Activated CD4-positive, alpha-beta T cell treated with anti-CD3 and anti-CD28 coated beads, Interleukin-2, amount 10 ng/mL, durations not matched to agents 7 days and 5 days (primary cell): ENCODE measurements at regions of chr14 and their contacts with region 1.

Region 1: GRCh38 chr14:68775143-68776126 is 17.4 kb downstream of the ZFP36L1 start:
- DNase-seq: no peak
- H3K4me3 Mint-ChIP-seq: no peak overlapping the region
- H3K27ac Mint-ChIP-seq: peak overlapping the region; percentile 14
- H3K4me1 Mint-ChIP-seq: peaks cover 67% of the 10 kb centered on the region
- H3K27me3 Mint-ChIP-seq: no peaks in the 10 kb centered on the region

Region 2: DNA sequence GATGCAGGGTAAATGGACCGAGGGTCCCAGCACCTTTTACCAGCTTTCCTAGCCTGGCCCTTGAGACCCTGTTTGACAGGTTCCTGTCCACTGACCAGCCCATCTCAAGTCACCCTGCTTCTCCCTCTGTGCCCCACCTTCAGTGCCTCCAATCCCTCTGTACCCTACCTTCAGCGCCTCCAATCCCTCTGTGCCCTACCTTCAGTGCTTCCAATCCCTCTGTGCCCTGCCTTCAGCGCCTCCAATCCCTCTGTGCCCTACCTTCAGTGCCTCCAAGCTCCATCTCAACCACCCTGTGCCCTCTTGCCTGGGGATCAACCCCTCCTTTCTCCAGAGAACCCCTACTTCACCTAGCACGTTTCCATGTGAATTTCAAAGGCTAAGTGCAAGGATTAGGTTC is 36.9 kb before region 1 on chr14:
- CTCF ChIA-PET with region 1: interaction called, 3 read pairs
- POLR2A ChIA-PET with region 1: interaction called, 11 read pairs
- DNase-seq: no peak
- H3K4me3 Mint-ChIP-seq: no peak overlapping the region
- H3K27ac Mint-ChIP-seq: no peak overlapping the region
- H3K4me1 Mint-ChIP-seq: peaks cover 20% of the 10 kb centered on the region
- H3K27me3 Mint-ChIP-seq: no peaks in the 10 kb centered on the region

Region 3: DNA sequence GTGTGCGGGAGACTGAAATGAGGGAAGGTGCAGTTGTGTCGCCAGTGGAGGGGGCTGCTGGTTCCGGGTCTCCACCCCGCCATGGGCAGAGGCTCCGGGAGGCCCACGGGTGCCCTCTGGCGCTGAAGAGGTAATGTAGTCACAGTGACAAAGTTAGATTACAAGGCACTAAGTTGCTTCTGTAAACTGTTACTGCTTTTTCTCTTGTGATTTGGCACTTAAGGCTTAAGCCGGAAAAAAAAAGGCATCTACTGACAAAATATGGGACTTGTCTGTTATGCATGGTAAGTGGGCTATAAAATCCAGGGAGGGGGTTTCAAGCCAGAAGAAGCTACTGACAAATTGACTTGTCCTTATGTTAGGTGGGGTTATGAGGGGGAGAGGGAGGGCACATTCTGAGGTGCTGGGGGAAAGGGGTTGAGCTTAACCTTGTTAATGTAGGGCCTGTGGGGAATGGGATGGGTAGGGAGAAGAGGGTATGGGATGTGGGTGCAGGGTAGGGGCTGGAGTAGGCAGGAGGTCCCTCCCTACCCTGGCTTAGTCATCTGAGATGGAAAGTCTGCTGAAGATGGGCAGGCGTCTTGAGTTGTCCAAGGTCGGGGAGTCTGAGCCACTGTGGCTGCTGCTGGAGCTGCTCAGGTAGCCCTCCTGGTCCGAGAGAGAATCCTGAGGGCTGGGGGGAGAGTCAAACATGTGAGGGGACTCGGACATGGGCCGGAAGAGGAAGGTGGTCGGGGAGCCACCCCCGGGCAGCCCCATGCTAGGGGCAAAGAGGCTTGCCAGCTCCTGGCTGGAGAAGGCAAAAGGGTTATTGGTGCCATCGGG is 13.8 kb after region 1 on chr14:
- CTCF ChIA-PET with region 1: interaction called, 35 read pairs
- POLR2A ChIA-PET with region 1: interaction called, 6 read pairs
- DNase-seq: peak; percentile 92
- H3K4me3 Mint-ChIP-seq: peak overlapping the region; percentile 88
- H3K27ac Mint-ChIP-seq: peak overlapping the region; percentile 100
- H3K4me1 Mint-ChIP-seq: peaks cover 54% of the 10 kb centered on the region
- H3K27me3 Mint-ChIP-seq: no peaks in the 10 kb centered on the region

Region 4: DNA sequence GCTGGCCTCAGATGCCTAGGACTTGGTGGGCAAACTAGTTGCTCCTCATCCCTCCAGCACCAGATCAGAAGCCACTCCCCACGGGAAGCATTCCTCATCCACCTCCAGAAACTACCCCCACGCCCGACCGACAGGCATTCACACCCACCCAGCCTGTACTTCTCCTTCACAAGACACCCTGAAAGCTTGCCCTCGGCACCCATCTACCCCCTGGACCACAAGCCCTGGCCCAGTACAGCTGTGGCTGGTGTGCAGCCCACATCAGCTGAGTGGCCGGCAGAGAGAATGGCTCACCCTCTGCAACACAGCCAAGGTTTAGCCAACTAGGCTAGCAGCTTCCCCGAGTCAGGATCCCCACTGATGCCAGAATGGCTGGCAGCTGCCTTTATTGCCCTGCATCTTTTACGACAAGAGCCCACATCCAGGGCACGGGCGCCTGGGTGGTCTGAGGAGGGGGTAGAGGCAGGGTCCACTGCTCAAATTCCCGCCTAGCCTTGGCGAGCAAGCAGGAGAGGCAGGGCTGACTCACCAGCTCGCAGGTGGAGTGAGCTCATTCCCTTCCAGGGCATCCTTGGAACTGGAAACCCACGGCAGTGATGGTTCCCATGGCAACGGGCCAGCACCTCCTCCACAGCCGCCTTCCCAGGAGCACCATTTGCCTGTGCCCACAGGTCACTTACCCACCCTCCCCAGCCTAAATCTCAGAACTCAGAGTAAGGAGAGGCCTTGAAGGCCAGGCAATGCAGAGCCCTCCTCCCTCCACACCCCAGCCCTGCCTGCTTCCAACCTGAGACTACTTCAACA is 186.5 kb after region 1 on chr14:
- CTCF ChIA-PET with region 1: no interaction called
- POLR2A ChIA-PET with region 1: no interaction called
- DNase-seq: no peak
- H3K4me3 Mint-ChIP-seq: no peak overlapping the region
- H3K27ac Mint-ChIP-seq: no peak overlapping the region
- H3K4me1 Mint-ChIP-seq: peaks cover 38% of the 10 kb centered on the region
- H3K27me3 Mint-ChIP-seq: no peaks in the 10 kb centered on the region